ENCODE measurements at regions of chr17 and their contacts with region 1.

Region 1: GRCh38 chr17:8435245-8436168 is at the start of gene NDEL1:
- DNase-seq: peak; percentile 97
- H3K4me3 Mint-ChIP-seq: peak within 1 kb of the TSS; percentile 84
- H3K27ac Mint-ChIP-seq: peak within 1 kb of the TSS; percentile 97
- H3K4me1 Mint-ChIP-seq: peaks cover 12% of the 10 kb centered on the region
- H3K27me3 Mint-ChIP-seq: no peaks in the 10 kb centered on the region
- CTCF ChIP-seq: no peak
- total RNA-seq, gene NDEL1: 95.3 and 112 TPM in 2 replicates

Region 2: DNA sequence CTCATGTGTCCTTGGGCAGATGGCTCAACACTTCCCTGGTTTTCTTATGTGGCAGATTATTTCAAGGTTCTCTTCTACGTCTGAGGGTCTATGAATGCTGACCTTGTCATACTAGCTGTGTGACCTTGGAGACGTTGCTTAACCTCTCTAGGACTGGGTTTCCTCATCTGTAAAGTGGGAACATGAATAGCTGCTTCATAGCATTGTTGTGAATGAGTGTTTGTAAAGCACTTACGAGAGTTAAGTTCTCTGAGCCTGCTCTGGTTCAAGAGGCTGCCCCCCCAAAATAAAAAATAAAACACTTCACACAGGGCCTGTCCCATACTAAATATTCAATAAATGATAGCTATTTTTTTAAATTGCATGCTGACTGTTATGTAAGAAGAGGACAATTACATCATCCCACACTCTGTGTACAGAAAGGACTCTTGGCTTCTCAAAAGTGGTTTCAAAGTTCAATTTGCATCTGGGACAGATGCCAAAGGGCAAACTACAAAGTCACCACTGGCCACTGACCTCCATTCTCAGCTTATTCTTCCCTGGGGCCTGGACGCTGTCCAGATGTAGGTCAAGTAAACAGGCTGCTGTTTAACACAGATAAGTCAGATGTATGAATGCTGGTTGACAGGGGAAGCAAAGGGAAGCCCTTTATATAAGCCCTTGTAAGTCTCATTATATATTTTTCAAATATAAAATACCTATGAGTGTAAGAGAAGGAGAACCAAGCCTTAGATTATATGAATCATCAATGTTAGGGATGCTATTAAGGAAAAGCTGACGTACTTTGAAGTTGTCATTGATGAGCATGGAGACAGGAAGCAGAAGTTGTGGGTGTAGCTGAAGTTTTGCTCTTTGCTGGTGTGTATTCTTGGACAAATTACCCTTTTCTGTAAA is 15.2 kb before region 1 on chr17:
- CTCF ChIA-PET with region 1: interaction called, 7 read pairs
- POLR2A ChIA-PET with region 1: interaction called, 31 read pairs
- intact Hi-C with region 1: no loop called
- DNase-seq: peak; percentile 80
- H3K4me3 Mint-ChIP-seq: no peak overlapping the region
- H3K27ac Mint-ChIP-seq: no peak overlapping the region
- H3K4me1 Mint-ChIP-seq: no peaks in the 10 kb centered on the region
- H3K27me3 Mint-ChIP-seq: peaks cover 23% of the 10 kb centered on the region
- CTCF ChIP-seq: no peak

Measured in MCF 10A (cell line).